ENCODE measurements at regions of chrX and their contacts with region 1.

Region 1: GRCh38 chrX:94329182-94329581 is 655.2 kb downstream of the FAM133A start:
- DNase-seq: no peak
- ATAC-seq: no peak
- H3K4me3 ChIP-seq: no peak overlapping the region
- H3K27ac ChIP-seq: no peak overlapping the region
- H3K4me1 ChIP-seq: no peaks in the 10 kb centered on the region
- H3K27me3 ChIP-seq: no peaks in the 10 kb centered on the region
- CTCF ChIP-seq: no peak
- POLR2A ChIP-seq: no peak
- RAD21 ChIP-seq: no peak

Region 2: DNA sequence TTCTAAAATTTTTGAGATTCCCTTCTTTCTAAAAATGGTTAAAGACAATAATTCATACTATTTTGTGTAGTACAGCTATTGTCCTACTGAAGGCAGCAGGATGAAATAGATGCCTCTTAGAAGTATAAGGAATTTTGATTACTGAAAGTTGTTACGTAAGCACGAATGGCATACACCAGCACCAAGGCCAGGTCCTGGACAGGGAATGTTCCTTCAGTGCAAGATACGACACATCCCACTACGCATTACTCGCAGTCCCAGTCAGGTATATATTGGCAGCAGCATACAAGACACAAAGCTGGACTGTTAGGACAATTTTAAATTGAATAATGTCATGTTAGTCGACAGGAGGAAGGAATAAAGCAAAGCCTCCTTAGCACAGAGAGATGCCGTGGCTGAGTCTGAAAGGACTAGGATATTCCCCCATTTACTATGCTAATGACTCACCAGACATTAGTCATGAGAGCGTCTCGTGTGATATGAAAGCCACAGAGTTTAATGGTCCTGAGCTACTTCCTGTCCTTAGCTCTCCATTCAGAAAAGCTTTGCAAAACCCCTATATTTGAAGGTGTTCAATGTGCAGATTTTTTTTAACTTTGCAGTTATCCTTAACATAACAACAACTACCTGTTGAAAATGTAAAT is 150.9 kb before region 1 on chrX:
- CTCF ChIA-PET with region 1: no interaction called
- POLR2A ChIA-PET with region 1: no interaction called
- dilution Hi-C with region 1: no loop called
- in situ Hi-C with region 1: no loop called
- intact Hi-C with region 1: no loop called
- DNase-seq: no peak
- ATAC-seq: no peak
- H3K4me3 ChIP-seq: no peak overlapping the region
- H3K27ac ChIP-seq: no peak overlapping the region
- H3K4me1 ChIP-seq: no peaks in the 10 kb centered on the region
- H3K27me3 ChIP-seq: no peaks in the 10 kb centered on the region
- CTCF ChIP-seq: no peak
- POLR2A ChIP-seq: no peak
- RAD21 ChIP-seq: no peak

Region 3: DNA sequence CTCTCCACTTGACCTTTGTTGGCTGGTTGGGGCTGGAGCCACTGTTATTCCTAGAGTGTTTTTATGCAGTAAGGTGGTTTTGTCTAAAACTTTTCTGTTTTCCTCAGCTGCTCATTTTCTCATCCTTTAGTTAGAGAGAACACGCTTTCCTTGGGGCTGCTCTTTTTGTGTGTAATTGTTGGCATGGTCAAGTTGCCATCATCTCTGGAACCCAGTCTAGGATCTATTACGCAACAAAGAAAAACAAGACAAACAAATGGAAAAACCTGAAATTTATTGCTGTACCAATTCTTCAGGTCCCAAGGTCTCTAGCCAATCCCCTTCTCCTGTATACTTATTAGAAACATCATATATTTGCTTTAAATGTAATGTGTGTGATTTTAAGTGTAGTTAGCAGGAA is 919.2 kb after region 1 on chrX:
- CTCF ChIA-PET with region 1: no interaction called
- POLR2A ChIA-PET with region 1: no interaction called
- dilution Hi-C with region 1: no loop called
- in situ Hi-C with region 1: no loop called
- intact Hi-C with region 1: loop called (anchors 10 kb)
- DNase-seq: no peak
- ATAC-seq: no peak
- H3K4me3 ChIP-seq: no peak overlapping the region
- H3K27ac ChIP-seq: no peak overlapping the region
- H3K4me1 ChIP-seq: no peaks in the 10 kb centered on the region
- H3K27me3 ChIP-seq: no peaks in the 10 kb centered on the region
- CTCF ChIP-seq: no peak
- POLR2A ChIP-seq: no peak
- RAD21 ChIP-seq: no peak

Measured in IMR-90 (cell line).